Psoas muscle (tissue), 8 donors: ENCODE measurements at regions of chr12 and their contacts with region 1.

Region 1: GRCh38 chr12:52184813-52185212 is 7.0 kb downstream of the KRT80 start:
- DNase-seq: no peak
- ATAC-seq: no peak
- H3K4me3 ChIP-seq: no peak overlapping the region
- H3K27ac ChIP-seq: no peak overlapping the region
- H3K4me1 ChIP-seq: peaks cover 8% of the 10 kb centered on the region
- H3K27me3 ChIP-seq: no peaks in the 10 kb centered on the region
- CTCF ChIP-seq: no peak

Region 2: DNA sequence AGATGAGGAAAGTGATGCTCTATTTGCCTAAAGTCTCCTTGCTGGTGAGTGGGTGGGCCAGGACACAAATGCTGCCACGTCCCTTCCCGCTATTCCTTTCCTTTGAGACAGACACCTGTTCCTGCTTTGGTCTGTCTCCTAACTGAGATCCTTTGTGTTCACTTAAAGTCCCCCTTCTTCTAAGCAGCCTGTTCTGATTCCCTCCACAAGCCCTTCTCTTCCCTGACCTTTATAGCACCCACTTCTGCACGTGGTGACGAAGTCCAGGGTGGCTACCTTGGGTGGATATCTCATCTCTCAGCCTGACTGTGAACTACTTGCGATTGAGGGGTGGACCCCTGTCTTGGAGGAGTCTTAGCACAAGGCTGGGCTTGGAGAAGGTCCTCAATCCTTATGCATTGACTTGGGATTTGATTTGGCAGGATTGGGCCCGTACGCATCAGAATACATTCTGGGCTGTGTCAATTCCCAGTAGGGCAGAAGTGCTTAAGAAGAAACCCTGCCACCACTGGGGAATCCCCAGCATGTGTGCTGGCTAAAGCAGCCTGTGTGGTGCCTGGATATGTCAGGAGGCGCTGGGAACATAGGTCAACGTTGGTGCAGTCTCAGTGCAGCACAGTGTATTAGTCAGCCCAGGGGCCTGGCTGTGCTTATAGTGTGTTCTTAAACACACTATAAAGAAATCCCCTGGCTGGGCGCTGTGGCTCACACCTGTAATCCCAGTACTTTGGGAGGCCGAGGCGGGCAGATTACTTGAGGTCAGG is 16.7 kb before region 1 on chr12:
- intact Hi-C with region 1: loop called in 1 of 2 experiments (anchors 1 kb)
- DNase-seq: no peak
- ATAC-seq: peak in 3 of 4 donors; percentile 24 to 67 (median 46)
- H3K4me3 ChIP-seq: no peak overlapping the region
- H3K27ac ChIP-seq: no peak overlapping the region
- H3K4me1 ChIP-seq: peaks cover 8% of the 10 kb centered on the region
- H3K27me3 ChIP-seq: no peaks in the 10 kb centered on the region
- CTCF ChIP-seq: no peak